CD4-positive, alpha-beta T cell (primary cell): ENCODE measurements at regions of chr15 and their contacts with region 1.

Region 1: GRCh38 chr15:42548253-42549031 is at the starts of genes HAUS2 and LRRC57:
- DNase-seq: peak; percentile 72 to 93 (median 83)
- ATAC-seq: peak; percentile 78
- H3K4me3 ChIP-seq: peak within 1 kb of the TSS; percentile 96
- H3K4me3 Mint-ChIP-seq: peak within 1 kb of the TSS; percentile 91
- H3K27ac ChIP-seq: peak within 1 kb of the TSS; percentile 76 to 84
- H3K27ac Mint-ChIP-seq: peak within 1 kb of the TSS; percentile 92
- H3K4me1 ChIP-seq: peaks cover 28% of the 10 kb centered on the region
- H3K4me1 Mint-ChIP-seq: peaks cover 64% of the 10 kb centered on the region
- H3K27me3 ChIP-seq: no peaks in the 10 kb centered on the region
- H3K27me3 Mint-ChIP-seq: no peaks in the 10 kb centered on the region
- CTCF ChIP-seq: no peak
- total RNA-seq, gene HAUS2: 23.0 to 28.2 TPM
- total RNA-seq, gene LRRC57: 25.8 to 29.6 TPM

Region 2: GRCh38 chr15:42581272-42581730 is 32.9 kb after region 1 on chr15:
- CTCF ChIA-PET with region 1: interaction called, 5 read pairs
- POLR2A ChIA-PET with region 1: interaction called, 29 read pairs
- intact Hi-C with region 1: no loop called
- DNase-seq: peak; percentile 60 to 89 (median 78)
- ATAC-seq: peak; percentile 100
- H3K4me3 ChIP-seq: peak overlapping the region; percentile 62
- H3K4me3 Mint-ChIP-seq: peak overlapping the region; percentile 87
- H3K27ac ChIP-seq: peak overlapping the region; percentile 47 to 67
- H3K27ac Mint-ChIP-seq: peak overlapping the region; percentile 86
- H3K4me1 ChIP-seq: peaks cover 18% of the 10 kb centered on the region
- H3K4me1 Mint-ChIP-seq: peaks cover 40% of the 10 kb centered on the region
- H3K27me3 ChIP-seq: no peaks in the 10 kb centered on the region
- H3K27me3 Mint-ChIP-seq: peaks cover 13% of the 10 kb centered on the region
- CTCF ChIP-seq: no peak

Region 3: GRCh38 chr15:42640103-42640502 is 91.7 kb after region 1 on chr15:
- CTCF ChIA-PET with region 1: no interaction called
- POLR2A ChIA-PET with region 1: no interaction called
- intact Hi-C with region 1: loop called in 1 of 2 experiments (anchors 10 kb)
- DNase-seq: no peak
- ATAC-seq: no peak
- H3K4me3 ChIP-seq: no peak overlapping the region
- H3K4me3 Mint-ChIP-seq: no peak overlapping the region
- H3K27ac ChIP-seq: no peak overlapping the region
- H3K27ac Mint-ChIP-seq: no peak overlapping the region
- H3K4me1 ChIP-seq: no peaks in the 10 kb centered on the region
- H3K4me1 Mint-ChIP-seq: no peaks in the 10 kb centered on the region
- H3K27me3 ChIP-seq: no peaks in the 10 kb centered on the region
- H3K27me3 Mint-ChIP-seq: no peaks in the 10 kb centered on the region
- CTCF ChIP-seq: no peak

Region 4: GRCh38 chr15:42650208-42651066 is 102.0 kb after region 1 on chr15:
- CTCF ChIA-PET with region 1: no interaction called
- POLR2A ChIA-PET with region 1: no interaction called
- intact Hi-C with region 1: loop called (anchors 5 to 10 kb)
- DNase-seq: peak; percentile 28 to 71 (median 40)
- ATAC-seq: peak; percentile 84
- H3K4me3 ChIP-seq: no peak overlapping the region
- H3K4me3 Mint-ChIP-seq: no peak overlapping the region
- H3K27ac ChIP-seq: no peak overlapping the region
- H3K27ac Mint-ChIP-seq: no peak overlapping the region
- H3K4me1 ChIP-seq: no peaks in the 10 kb centered on the region
- H3K4me1 Mint-ChIP-seq: no peaks in the 10 kb centered on the region
- H3K27me3 ChIP-seq: no peaks in the 10 kb centered on the region
- H3K27me3 Mint-ChIP-seq: no peaks in the 10 kb centered on the region
- CTCF ChIP-seq: peak; percentile 74